Activated CD4-positive, alpha-beta memory T cell treated with anti-CD3 and anti-CD28 coated beads for 36 hours (primary cell): ENCODE measurements at regions of chr2 and their contacts with region 1.

Region 1: DNA sequence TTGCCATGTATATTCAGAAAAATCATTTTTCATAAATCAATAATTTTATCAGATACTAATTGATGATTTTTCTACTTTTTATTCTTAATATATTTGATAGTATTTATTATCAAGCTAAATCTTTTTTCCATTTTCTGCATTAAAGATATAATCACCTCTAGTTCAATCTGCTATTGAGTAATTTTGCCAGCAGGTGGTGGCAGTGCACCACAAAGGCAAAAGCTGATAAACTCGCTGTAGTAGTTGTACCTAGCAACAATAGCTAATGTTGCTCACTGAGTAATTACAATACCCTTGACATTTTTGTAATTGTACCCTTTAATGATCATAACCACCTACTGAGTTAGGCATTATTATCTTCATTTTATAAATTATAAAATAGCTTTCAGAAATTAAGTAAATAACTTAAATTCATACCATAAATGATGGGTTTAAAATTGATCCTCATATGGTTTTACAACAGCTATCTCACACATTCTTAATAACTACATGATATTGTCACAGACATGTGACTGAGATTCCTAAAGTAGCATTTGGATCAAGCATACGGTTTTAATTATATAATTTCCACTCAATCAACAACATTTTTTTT is 52.0 kb upstream of the CALCRL start:
- DNase-seq: peak; percentile 51
- H3K4me3 Mint-ChIP-seq: no peak overlapping the region
- H3K27ac Mint-ChIP-seq: no peak overlapping the region
- H3K4me1 Mint-ChIP-seq: no peaks in the 10 kb centered on the region
- H3K27me3 Mint-ChIP-seq: peaks cover 4% of the 10 kb centered on the region

Region 2: GRCh38 chr2:187842978-187843847 is 343.2 kb after region 1 on chr2:
- CTCF ChIA-PET with region 1: interaction called, 14 read pairs
- POLR2A ChIA-PET with region 1: no interaction called
- intact Hi-C with region 1: no loop called
- DNase-seq: no peak
- H3K4me3 Mint-ChIP-seq: no peak overlapping the region
- H3K27ac Mint-ChIP-seq: no peak overlapping the region
- H3K4me1 Mint-ChIP-seq: no peaks in the 10 kb centered on the region
- H3K27me3 Mint-ChIP-seq: no peaks in the 10 kb centered on the region

Region 3: DNA sequence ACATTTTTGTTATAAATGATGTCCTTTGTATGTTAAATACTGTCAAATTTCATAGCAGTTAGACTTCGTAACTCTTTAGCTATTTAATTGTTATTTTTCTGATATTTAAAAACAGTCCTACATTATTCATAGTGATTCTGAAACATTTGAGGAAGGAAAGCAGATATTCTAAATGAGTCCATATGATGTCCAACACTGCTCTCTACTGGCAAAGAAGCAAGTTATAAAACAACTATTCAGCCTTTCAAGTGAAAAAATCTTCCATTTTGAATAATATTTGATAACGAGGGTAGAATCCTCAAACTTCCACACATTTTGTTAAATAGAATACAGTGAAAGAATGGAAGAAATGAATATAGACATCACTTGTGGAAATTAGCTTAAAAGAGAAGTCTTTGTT is 1012.4 kb after region 1 on chr2:
- CTCF ChIA-PET with region 1: interaction called, 6 read pairs
- POLR2A ChIA-PET with region 1: no interaction called
- intact Hi-C with region 1: loop called (anchors 2 kb)
- DNase-seq: no peak
- H3K4me3 Mint-ChIP-seq: no peak overlapping the region
- H3K27ac Mint-ChIP-seq: no peak overlapping the region
- H3K4me1 Mint-ChIP-seq: no peaks in the 10 kb centered on the region
- H3K27me3 Mint-ChIP-seq: no peaks in the 10 kb centered on the region